A549 (cell line): ENCODE measurements at regions of chr1 and their contacts with region 1.

Region 1: GRCh38 chr1:178501705-178502329 is 5.1 kb upstream of the CLEC20A start:
- DNase-seq: peak; percentile 62 to 80
- ATAC-seq: peak; percentile 76 to 92
- H3K4me3 ChIP-seq: no peak overlapping the region
- H3K27ac ChIP-seq: no peak overlapping the region
- H3K4me1 ChIP-seq: no peaks in the 10 kb centered on the region
- CTCF ChIP-seq: peak; percentile 84
- EP300 ChIP-seq: no peak
- POLR2A ChIP-seq: no peak
- RAD21 ChIP-seq: peak; percentile 72 to 80

Region 2: DNA sequence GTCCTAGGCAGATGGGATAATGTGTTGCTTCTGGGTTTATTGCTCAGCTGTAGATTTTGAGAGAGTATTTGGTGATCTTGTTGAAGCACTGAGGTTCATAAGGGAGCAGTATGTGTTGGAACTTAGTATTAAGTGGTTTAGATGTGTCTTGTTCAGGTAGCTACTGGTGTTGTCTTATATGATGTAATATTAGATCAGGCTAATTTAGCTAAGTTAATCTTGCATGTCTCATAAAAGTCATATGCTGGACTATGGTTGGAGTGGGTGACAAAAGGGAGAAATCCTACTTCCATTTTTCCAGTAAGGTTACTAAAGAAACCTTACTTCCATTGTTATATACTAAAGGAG is 201.5 kb before region 1 on chr1:
- CTCF ChIA-PET with region 1: interaction called, 13 read pairs
- POLR2A ChIA-PET with region 1: no interaction called
- DNase-seq: no peak
- ATAC-seq: no peak; a peak in 1 of 6 replicates
- H3K4me3 ChIP-seq: no peak overlapping the region
- H3K27ac ChIP-seq: 0 out of 6 replicates have a peak overlapping the region, but pooled peaks of 1 of the 2 experiments have one; percentile 8
- H3K4me1 ChIP-seq: 0 out of 3 replicates have a peak, but pooled peaks cover 3% of the 10 kb centered on the region
- CTCF ChIP-seq: no peak
- EP300 ChIP-seq: no peak
- POLR2A ChIP-seq: no peak
- RAD21 ChIP-seq: no peak

Region 3: DNA sequence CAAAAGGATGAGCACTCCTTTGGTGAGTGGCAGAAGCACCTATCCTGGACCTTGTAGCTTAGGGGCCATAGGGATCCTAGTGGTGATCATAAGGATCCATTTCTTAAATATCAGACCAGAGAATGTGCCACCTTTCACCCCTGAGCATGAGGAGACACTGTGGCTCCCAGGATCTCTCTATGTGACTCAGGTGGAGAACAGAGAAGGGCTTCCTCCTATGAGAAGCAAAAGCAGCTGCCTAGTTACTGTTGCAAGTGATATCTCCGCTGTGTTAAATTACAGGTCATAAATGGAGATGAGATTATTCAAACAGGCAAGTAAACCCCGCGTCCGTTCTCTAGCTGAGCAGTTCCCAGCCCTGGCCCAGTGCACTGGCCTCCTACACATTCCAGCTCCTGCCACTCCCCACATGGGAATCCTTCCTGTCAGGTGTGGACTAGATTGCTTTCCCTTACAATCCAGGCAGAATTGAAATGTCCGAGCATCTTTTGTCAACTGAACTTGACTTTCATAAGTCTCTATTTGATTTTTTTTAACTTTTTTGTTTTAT is 31.3 kb before region 1 on chr1:
- CTCF ChIA-PET with region 1: interaction called, 16 read pairs
- POLR2A ChIA-PET with region 1: no interaction called
- DNase-seq: peak in 1 of 2 experiments; percentile 20
- ATAC-seq: peak; percentile 64 to 65; a peak in 3 of 6 replicates
- H3K4me3 ChIP-seq: no peak overlapping the region
- H3K27ac ChIP-seq: no peak overlapping the region
- H3K4me1 ChIP-seq: no peaks in the 10 kb centered on the region
- CTCF ChIP-seq: no peak
- EP300 ChIP-seq: no peak
- POLR2A ChIP-seq: no peak
- RAD21 ChIP-seq: no peak

Region 4: GRCh38 chr1:178486100-178487069 is 15.4 kb before region 1 on chr1:
- CTCF ChIA-PET with region 1: interaction called, 26 read pairs
- POLR2A ChIA-PET with region 1: no interaction called
- DNase-seq: no peak
- ATAC-seq: peak in 1 of 2 experiments; percentile 12; a peak in 1 of 6 replicates
- H3K4me3 ChIP-seq: no peak overlapping the region
- H3K27ac ChIP-seq: no peak overlapping the region
- H3K4me1 ChIP-seq: no peaks in the 10 kb centered on the region
- CTCF ChIP-seq: no peak
- EP300 ChIP-seq: no peak
- POLR2A ChIP-seq: no peak
- RAD21 ChIP-seq: no peak

Region 5: GRCh38 chr1:178513278-178514022 is 11.6 kb after region 1 on chr1:
- CTCF ChIA-PET with region 1: interaction called, 54 read pairs
- POLR2A ChIA-PET with region 1: no interaction called
- DNase-seq: no peak
- ATAC-seq: no peak
- H3K4me3 ChIP-seq: no peak overlapping the region
- H3K27ac ChIP-seq: no peak overlapping the region
- H3K4me1 ChIP-seq: no peaks in the 10 kb centered on the region
- CTCF ChIP-seq: no peak
- EP300 ChIP-seq: no peak
- POLR2A ChIP-seq: no peak
- RAD21 ChIP-seq: no peak

Region 6: GRCh38 chr1:178532392-178532791 is 30.6 kb after region 1 on chr1:
- CTCF ChIA-PET with region 1: interaction called, 34 read pairs
- POLR2A ChIA-PET with region 1: no interaction called
- DNase-seq: peak; percentile 80 to 94
- ATAC-seq: peak; percentile 71 to 90
- H3K4me3 ChIP-seq: no peak overlapping the region
- H3K27ac ChIP-seq: peak overlapping the region; percentile 27 to 68; a peak in 4 of 6 replicates
- H3K4me1 ChIP-seq: peaks cover 29% of the 10 kb centered on the region
- CTCF ChIP-seq: peak; percentile 92
- EP300 ChIP-seq: no peak
- POLR2A ChIP-seq: no peak
- RAD21 ChIP-seq: peak; percentile 92 to 96

Region 7: DNA sequence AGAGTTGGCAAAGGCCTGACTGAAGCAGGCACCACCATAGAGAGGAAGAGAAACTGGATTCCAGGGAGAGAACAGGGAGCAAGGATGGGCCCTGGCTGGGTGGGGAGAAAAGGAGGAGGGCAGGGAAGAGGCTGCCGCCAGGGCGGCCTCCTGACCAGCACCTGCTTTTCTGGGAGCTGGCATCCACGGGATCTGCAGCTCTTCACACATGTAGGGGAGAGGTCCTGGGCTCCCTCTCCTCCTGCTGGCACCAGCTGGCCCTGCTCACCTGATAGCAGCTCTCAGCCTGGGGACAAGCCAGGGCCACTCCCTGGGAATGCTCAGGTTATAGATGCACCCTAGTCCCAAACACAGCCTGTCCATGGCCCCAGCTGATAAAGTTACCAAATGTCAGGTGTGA is 51.0 kb after region 1 on chr1:
- CTCF ChIA-PET with region 1: no interaction called
- POLR2A ChIA-PET with region 1: no interaction called
- DNase-seq: no peak
- ATAC-seq: peak in 1 of 2 experiments; percentile 24; a peak in 1 of 6 replicates
- H3K4me3 ChIP-seq: no peak overlapping the region
- H3K27ac ChIP-seq: no peak overlapping the region
- H3K4me1 ChIP-seq: no peaks in the 10 kb centered on the region
- CTCF ChIP-seq: no peak
- EP300 ChIP-seq: no peak
- POLR2A ChIP-seq: no peak
- RAD21 ChIP-seq: no peak

Region 8: GRCh38 chr1:178581351-178582303 is 79.8 kb after region 1 on chr1:
- CTCF ChIA-PET with region 1: no interaction called
- POLR2A ChIA-PET with region 1: no interaction called
- DNase-seq: no peak
- ATAC-seq: no peak
- H3K4me3 ChIP-seq: no peak overlapping the region
- H3K27ac ChIP-seq: no peak overlapping the region
- H3K4me1 ChIP-seq: no peaks in the 10 kb centered on the region
- CTCF ChIP-seq: no peak
- EP300 ChIP-seq: no peak
- POLR2A ChIP-seq: no peak
- RAD21 ChIP-seq: no peak

Region 9: DNA sequence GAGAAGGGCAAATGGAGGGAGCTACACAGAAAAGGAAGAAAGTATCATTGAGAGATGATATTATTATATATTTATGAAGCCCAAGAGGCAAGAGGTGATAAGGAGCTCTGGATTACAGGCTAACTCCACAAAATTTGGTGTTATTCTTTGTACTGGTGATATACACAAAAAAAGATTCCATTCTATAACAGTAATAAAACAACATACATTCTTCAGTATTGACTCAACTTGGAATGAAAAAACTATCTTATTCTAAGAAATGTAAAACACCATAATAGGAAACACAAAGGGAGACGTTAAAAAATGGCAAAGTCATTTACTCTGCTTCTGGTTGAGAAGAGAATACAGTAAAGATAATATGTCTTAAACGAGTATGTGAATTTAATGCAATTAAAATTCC is 110.4 kb after region 1 on chr1:
- CTCF ChIA-PET with region 1: no interaction called
- POLR2A ChIA-PET with region 1: no interaction called
- DNase-seq: no peak
- ATAC-seq: no peak
- H3K4me3 ChIP-seq: no peak overlapping the region
- H3K27ac ChIP-seq: no peak overlapping the region
- H3K4me1 ChIP-seq: peaks cover 12% of the 10 kb centered on the region
- CTCF ChIP-seq: no peak
- EP300 ChIP-seq: no peak
- POLR2A ChIP-seq: no peak
- RAD21 ChIP-seq: no peak